ENCODE measurements at regions of chr4 and their contacts with region 1.

Region 1: GRCh38 chr4:24912252-24913118 is at the start of gene CCDC149:
- DNase-seq: peak; percentile 80
- total RNA-seq, gene CCDC149: 11.7 TPM

Region 2: GRCh38 chr4:24413291-24413784 is 499.1 kb before region 1 on chr4:
- intact Hi-C with region 1: no loop called
- DNase-seq: no peak

Region 3: GRCh38 chr4:24472514-24473308 is 439.8 kb before region 1 on chr4:
- intact Hi-C with region 1: loop called (anchors 5 kb)
- DNase-seq: peak; percentile 86